ENCODE measurements at regions of chr17 and their contacts with region 1.

Region 1: DNA sequence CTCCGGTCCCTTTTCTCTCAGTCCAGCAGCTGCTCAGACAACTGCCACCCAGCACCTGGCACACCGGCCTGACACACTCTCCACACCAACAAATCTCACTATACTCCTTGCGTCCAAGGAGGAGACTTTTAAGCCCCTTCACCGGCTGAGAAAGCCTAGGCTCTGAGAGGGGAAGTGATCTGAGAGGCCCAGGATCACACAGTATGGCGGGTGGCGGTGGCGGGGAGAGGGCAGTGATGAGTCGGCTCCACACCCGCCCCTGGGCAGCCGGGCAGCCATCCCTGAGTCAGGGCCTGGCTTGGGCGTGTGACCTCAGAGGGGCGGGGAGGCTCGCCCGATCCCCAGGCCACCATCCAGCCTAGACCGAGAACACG is 569 bp downstream of the FLII start:
- DNase-seq: peak; percentile 54
- H3K4me3 ChIP-seq: peak overlapping the region; percentile 73 to 98
- H3K27ac ChIP-seq: peak overlapping the region; percentile 85 to 93
- H3K4me1 ChIP-seq: peaks cover 14% of the 10 kb centered on the region
- H3K27me3 ChIP-seq: no peaks in the 10 kb centered on the region
- CTCF ChIP-seq: no peak
- POLR2A ChIP-seq: peak; percentile 38

Region 2: DNA sequence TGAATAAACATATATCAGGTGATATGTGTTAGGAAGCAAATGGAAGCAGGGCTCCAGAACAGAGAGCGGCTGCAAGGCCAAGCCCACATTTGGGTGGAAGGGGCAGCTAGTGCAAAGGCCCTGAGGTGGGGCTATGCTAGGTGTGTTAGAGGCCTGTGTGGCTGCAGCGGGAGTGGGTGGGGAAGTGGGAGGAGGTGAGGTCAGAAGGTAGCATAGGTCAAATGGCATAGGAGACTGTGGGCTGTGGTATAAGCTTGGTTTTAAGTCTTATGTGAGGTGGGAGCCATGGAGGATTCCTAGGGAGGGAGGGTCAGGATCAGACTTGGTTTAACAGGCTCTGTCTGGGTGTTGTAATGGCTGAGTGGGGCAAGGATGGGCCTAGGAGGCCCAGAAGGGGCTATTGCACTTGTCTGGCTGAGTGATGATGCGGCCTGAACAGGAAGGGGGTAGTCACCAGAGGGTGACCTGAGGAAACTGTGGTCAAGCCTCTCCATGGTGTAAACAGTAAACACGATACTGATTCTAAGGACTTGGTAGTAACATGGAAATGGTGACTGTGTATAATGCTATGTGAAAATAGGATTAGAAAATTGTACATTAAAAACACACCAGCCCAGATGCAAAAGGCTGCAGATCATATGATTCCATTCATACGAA is 545.6 kb before region 1 on chr17:
- intact Hi-C with region 1: no loop called
- DNase-seq: no peak
- H3K4me3 ChIP-seq: no peak overlapping the region
- H3K27ac ChIP-seq: peak overlapping the region; percentile 84 to 87
- H3K4me1 ChIP-seq: peaks cover 39% of the 10 kb centered on the region
- H3K27me3 ChIP-seq: no peaks in the 10 kb centered on the region
- CTCF ChIP-seq: no peak
- POLR2A ChIP-seq: no peak

Region 3: DNA sequence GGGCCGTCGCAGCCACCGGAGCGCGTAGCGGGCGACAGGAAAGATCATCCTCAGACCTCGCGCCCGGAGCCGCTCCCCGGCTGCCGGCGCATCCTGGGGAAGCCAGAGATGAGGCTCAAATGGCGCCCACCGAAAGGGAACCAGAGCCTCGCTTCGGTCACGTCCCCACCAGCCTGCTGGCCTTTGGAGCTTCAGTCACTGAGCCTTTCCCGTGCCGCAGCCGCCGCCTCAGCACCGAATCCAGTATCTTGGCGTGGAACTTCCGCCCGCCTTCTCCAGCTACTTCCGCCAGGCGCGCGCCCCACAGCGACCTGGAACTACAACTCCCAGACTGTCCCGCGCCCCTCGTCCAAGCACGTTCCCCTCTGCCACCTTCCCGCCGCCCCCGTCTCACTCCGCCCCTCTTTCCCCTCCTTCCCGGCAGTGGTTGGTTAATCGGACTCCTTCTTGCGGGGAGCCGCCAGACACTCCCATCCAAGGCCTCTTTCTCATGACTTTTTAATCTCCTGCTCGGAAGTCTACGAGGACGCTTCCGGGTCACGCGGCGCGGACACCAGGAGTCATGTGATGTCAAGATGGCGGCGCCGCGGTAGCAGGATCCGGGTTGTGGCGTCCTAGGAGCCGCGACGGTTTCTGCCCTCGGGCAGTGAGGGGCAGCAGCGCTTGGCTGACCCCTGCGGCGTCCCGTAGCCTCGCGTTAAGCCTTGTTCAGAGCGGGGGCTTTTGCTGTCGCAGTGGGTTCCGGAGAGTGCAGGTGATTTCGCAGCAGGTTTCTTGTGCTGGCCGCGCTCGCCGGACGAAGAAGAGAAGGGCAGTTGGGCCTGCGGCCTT is 57.0 kb after region 1 on chr17 and contains the starts of genes SMCR8 and TOP3A:
- intact Hi-C with region 1: loop called (anchors 5 kb)
- DNase-seq: peak; percentile 99
- H3K4me3 ChIP-seq: peak within 1 kb of the TSS; percentile 72 to 86
- H3K27ac ChIP-seq: peak within 1 kb of the TSS; percentile 83 to 91
- H3K4me1 ChIP-seq: peaks cover 28% of the 10 kb centered on the region
- H3K27me3 ChIP-seq: no peaks in the 10 kb centered on the region
- CTCF ChIP-seq: peak in 3 of 4 experiments; percentile 7 to 54 (median 8)
- POLR2A ChIP-seq: peak; percentile 41
- total RNA-seq, gene SMCR8: 19.0 to 25.3 TPM
- total RNA-seq, gene TOP3A: 18.4 to 37.1 TPM